ENCODE measurements at regions of chr2 and their contacts with region 1.

Region 1: DNA sequence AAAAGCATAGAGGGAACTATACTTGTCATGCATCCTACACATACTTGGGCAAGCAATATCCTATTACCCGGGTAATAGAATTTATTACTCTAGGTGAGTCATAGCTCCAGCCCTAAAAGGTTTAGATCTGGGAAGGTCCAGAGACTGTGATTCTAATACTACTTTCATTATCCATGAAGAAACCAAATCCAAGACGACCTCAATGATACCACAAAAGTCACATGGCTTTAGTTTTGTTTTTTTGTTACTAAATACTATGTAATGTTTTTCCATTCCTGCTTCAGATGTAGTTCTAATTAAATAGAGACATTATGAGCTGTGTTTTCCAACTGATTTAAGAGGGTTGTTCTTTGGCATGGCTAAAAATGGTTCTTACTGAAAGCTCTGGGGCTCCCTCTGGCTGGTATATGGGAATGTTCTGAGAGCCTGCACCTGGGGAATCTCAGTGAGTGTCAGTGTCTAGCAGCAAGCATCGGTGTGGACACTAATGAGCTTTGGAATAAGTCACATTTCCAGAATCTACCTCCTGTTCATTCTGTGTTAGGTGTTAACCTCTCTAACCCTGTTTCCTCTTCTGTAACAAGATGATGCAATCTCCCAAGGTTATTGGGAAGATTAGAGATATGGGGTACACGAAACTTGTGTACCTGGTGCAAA is 20.5 kb upstream of the IL1RL2 start:
- DNase-seq: no peak
- ATAC-seq: peak; percentile 67; the same call in 1 of the 2 replicates
- H3K4me3 ChIP-seq: no peak overlapping the region
- H3K27ac ChIP-seq: no peak overlapping the region
- H3K4me1 ChIP-seq: peaks cover 9 to 12% of the 10 kb centered on the region in 2 experiments
- H3K27me3 ChIP-seq: no peaks in the 10 kb centered on the region
- CTCF ChIP-seq: peak; percentile 40 to 68 (median 47); a peak in 4 of 6 replicates
- POLR2A ChIP-seq: no peak
- RAD21 ChIP-seq: peak; percentile 77

Region 2: DNA sequence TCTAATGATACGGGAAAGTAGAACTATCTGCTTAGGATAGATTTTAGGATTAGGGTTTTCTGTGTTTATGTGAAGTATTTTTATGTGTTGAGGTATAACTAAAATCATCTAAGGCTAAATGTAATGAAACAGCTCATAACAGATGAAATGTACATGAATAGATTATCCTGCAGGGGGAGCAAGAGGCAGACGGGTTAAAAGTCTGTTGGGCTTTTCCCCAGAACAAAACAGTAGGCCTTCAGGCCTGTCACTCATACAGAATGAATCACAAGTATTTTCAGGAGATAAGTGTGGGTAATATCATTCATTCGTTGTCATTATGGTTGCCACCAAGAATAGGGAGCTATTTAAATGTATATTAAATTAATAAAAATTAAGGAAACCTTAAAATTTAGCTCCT is 282.5 kb before region 1 on chr2:
- CTCF ChIA-PET with region 1: interaction called, 3 read pairs
- POLR2A ChIA-PET with region 1: no interaction called
- RAD21 ChIA-PET with region 1: no interaction called
- intact Hi-C with region 1: loop called (anchors 10 kb)
- DNase-seq: peak; percentile 8
- ATAC-seq: peak; percentile 78
- H3K4me3 ChIP-seq: no peak overlapping the region
- H3K27ac ChIP-seq: no peak overlapping the region
- H3K4me1 ChIP-seq: no peaks in the 10 kb centered on the region
- H3K27me3 ChIP-seq: no peaks in the 10 kb centered on the region
- CTCF ChIP-seq: peak; percentile 41 to 67 (median 61); a peak in 5 of 6 replicates
- POLR2A ChIP-seq: no peak
- RAD21 ChIP-seq: peak; percentile 47

Region 3: GRCh38 chr2:102020596-102021181 is 145.6 kb before region 1 on chr2:
- CTCF ChIA-PET with region 1: interaction called, 32 read pairs
- POLR2A ChIA-PET with region 1: interaction called, 3 read pairs
- RAD21 ChIA-PET with region 1: interaction called, 6 to 9 read pairs
- intact Hi-C with region 1: loop called (anchors 1 kb)
- DNase-seq: peak; percentile 61
- ATAC-seq: peak; percentile 99
- H3K4me3 ChIP-seq: no peak overlapping the region
- H3K27ac ChIP-seq: no peak overlapping the region
- H3K4me1 ChIP-seq: no peaks in the 10 kb centered on the region
- H3K27me3 ChIP-seq: no peaks in the 10 kb centered on the region
- CTCF ChIP-seq: peak; percentile 89 to 98 (median 97)
- POLR2A ChIP-seq: no peak
- RAD21 ChIP-seq: peak; percentile 97

Region 4: GRCh38 chr2:102155642-102156491 is 10.4 kb before region 1 on chr2:
- CTCF ChIA-PET with region 1: interaction called, 13 read pairs
- POLR2A ChIA-PET with region 1: no interaction called
- RAD21 ChIA-PET with region 1: no interaction called
- intact Hi-C with region 1: no loop called
- DNase-seq: no peak
- ATAC-seq: no peak
- H3K4me3 ChIP-seq: no peak overlapping the region
- H3K27ac ChIP-seq: no peak overlapping the region
- H3K4me1 ChIP-seq: peaks cover under 1 to 2% of the 10 kb centered on the region in 2 experiments; a peak in 3 of 4 replicates
- H3K27me3 ChIP-seq: no peaks in the 10 kb centered on the region
- CTCF ChIP-seq: no peak
- POLR2A ChIP-seq: no peak
- RAD21 ChIP-seq: no peak

Measured in HCT116 (cell line).